ENCODE measurements at regions of chr1 and their contacts with region 1.

Region 1: DNA sequence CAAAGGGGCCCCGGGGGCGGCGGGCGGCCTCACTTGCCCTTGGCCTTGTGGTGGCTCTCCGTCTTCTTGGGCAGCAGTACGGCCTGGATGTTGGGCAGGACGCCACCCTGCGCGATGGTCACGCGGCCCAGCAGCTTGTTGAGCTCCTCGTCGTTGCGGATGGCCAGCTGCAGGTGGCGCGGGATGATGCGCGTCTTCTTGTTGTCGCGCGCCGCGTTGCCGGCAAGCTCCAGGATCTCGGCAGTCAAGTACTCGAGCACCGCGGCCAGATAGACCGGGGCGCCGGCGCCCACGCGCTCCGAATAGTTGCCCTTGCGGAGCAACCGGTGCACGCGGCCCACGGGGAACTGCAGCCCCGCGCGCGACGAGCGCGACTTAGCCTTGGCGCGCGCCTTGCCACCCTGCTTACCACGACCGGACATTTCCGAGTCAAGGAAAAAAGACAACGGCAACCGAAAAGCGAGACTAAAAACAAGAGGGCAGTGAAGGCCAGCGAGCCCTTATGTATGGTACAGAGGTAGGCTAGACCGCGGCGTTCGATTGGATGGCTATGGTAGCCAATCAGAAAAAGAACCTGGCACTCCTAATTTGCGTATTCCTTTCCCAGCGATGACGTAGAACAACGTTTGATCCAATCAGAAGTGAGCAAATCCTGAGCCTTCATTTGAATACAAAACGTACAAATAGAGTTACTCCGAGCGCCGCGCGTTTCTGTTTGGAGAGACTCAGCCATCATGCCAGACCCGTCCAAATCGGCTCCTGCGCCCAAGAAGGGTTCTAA is 29.6 kb upstream of the RNF187 start:
- DNase-seq: peak; percentile 91

Region 2: DNA sequence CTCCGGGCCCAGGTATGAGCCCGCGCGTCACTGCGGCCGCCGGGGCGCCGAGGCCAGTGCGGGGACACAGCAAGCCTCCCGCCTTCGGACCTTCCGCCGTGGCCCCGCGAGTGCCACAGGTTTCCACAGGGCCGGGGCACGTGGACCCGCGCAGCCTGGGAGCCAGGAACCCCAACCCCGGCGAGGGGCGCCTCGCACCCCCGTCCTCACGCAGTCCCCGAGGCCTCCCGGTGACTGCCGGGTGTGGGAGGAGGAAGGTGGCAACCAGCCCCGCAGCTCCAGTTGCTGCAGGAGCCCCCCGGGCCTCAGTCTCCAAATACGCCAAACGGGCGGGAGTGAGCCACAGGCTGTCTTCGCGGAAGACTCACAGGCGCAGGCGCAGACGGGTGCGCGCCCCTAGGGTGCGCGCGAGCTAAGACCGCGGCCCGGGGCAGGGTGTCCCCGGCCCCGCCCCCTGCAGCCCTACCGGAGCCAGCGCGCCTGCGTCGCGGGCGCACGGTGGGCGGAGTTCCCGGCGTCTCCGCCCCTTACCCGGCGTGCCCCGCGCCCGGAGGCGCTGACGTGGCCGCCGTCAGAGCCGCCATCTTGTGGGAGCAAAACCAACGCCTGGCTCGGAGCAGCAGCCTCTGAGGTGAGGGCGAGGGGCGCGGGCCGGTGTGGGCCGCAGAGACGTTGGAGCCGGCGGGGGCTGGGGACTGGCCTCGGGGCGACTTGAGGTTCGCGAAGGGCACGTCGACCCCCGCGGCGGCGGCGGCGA is 375.3 kb before region 1 on chr1 and contains the start of gene ARF1:
- intact Hi-C with region 1: loop called (anchors 5 kb)
- DNase-seq: peak; percentile 97
- total RNA-seq, gene ARF1: 332 TPM

Region 3: DNA sequence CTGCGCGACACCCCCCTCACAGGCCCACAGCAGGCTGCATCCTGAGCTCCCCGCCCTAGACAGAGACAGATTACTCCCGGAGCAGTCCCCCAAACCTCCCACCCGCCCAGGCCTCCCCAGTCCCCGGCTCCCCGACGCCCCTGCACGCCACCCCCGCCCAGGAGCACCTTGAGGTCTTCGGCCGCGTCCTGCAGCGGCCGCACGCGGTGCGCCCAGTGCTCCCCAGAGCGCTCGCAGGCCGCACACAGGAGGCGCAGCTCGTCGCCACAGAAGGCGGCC is 51.7 kb before region 1 on chr1:
- intact Hi-C with region 1: loop called (anchors 5 kb)
- DNase-seq: no peak

Region 4: DNA sequence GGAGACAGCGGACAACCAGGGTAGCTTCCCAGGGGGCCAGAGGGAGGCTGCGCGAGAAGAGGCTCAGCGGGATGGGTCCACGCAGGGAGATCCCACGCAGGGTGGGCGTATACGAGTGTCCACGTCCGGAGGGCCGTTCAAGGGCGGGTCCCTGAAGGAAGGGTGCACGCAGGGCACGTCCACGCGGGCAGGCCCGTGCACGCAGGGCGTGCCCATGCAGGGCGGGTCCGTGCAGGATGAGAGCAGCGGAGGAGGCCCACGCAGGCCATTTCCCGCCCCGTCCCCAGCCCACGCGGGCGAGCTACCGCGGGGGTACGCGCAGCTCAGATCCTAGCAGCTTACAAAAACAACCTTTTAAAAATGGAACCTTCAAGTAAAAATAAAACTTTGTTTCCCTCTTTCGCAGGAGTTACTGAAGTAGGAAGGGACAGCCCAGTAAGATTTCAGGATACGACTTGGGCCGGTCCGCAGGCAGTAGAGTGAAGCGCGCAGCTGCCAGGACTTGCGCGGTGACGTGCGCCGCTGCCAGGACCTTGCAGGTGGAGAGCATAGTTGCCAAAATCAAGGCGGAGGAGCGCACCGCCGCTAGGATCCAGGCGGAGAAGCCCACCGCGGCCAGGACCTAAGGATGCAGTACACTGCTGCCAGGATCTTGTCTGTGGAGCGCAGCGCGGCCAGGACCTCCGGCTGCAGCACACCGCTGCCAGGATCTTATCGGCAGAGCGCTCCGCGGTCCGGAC is 29.2 kb after region 1 on chr1:
- intact Hi-C with region 1: loop called (anchors 1 kb)
- DNase-seq: peak; percentile 86

Region 5: GRCh38 chr1:228497817-228498216 is 40.2 kb after region 1 on chr1:
- intact Hi-C with region 1: no loop called
- DNase-seq: peak; percentile 41

Measured in cardiac septum (tissue), 1 donor.